HepG2 (cell line): ENCODE measurements at regions of chr4 and their contacts with region 1.

Region 1: GRCh38 chr4:107034091-107034995 is 1.8 kb downstream of the DKK2 start:
- DNase-seq: peak; percentile 16
- ATAC-seq: peak; percentile 97
- H3K4me3 ChIP-seq: peak overlapping the region in 2 of 3 experiments; percentile 23 to 37; a peak in 3 of 6 replicates
- H3K27ac ChIP-seq: no peak overlapping the region
- H3K4me1 ChIP-seq: peaks cover 10% of the 10 kb centered on the region; the same call in 1 of the 2 replicates
- H3K27me3 ChIP-seq: no peaks in the 10 kb centered on the region; a peak in 1 of 5 replicates
- CTCF ChIP-seq: peak; percentile 52
- EP300 ChIP-seq: no peak
- POLR2A ChIP-seq: no peak
- RAD21 ChIP-seq: 0 out of 2 replicates have a peak, but pooled peaks have one; percentile 16

Region 2: DNA sequence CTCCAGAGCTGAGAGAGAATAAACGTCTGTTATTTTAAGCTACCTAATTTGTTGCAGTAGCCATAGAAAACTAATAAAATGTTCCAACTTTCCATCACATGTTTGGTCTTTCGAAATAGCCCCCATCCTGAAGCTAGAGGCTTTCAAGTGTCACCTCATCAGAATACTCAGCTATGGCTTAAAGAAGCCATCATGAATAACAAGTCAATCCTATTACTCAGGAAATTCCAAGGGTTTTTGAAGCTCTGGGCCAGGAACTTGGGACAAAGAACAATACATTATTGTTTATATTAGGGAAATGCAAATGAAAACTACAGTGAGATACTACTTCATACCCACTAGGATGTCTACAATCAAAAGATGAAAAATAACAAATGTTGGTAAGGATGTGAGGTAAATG is 760.5 kb before region 1 on chr4:
- CTCF ChIA-PET with region 1: no interaction called
- POLR2A ChIA-PET with region 1: no interaction called
- in situ Hi-C with region 1: no loop called
- intact Hi-C with region 1: loop called (anchors 5 kb)
- DNase-seq: no peak
- ATAC-seq: no peak
- H3K4me3 ChIP-seq: no peak overlapping the region
- H3K27ac ChIP-seq: no peak overlapping the region
- H3K4me1 ChIP-seq: peaks cover 22% of the 10 kb centered on the region
- H3K27me3 ChIP-seq: no peaks in the 10 kb centered on the region
- CTCF ChIP-seq: no peak
- EP300 ChIP-seq: no peak
- POLR2A ChIP-seq: no peak
- RAD21 ChIP-seq: no peak

Region 3: GRCh38 chr4:107069049-107069448 is 34.7 kb after region 1 on chr4:
- CTCF ChIA-PET with region 1: no interaction called
- POLR2A ChIA-PET with region 1: no interaction called
- in situ Hi-C with region 1: no loop called
- intact Hi-C with region 1: no loop called
- DNase-seq: no peak
- ATAC-seq: no peak
- H3K4me3 ChIP-seq: no peak overlapping the region
- H3K27ac ChIP-seq: no peak overlapping the region
- H3K4me1 ChIP-seq: no peaks in the 10 kb centered on the region
- H3K27me3 ChIP-seq: no peaks in the 10 kb centered on the region
- CTCF ChIP-seq: no peak
- EP300 ChIP-seq: no peak
- POLR2A ChIP-seq: no peak
- RAD21 ChIP-seq: no peak

Region 4: GRCh38 chr4:107120661-107121060 is 86.3 kb after region 1 on chr4:
- CTCF ChIA-PET with region 1: no interaction called
- POLR2A ChIA-PET with region 1: no interaction called
- in situ Hi-C with region 1: no loop called
- intact Hi-C with region 1: no loop called
- DNase-seq: no peak
- ATAC-seq: no peak
- H3K4me3 ChIP-seq: no peak overlapping the region
- H3K27ac ChIP-seq: no peak overlapping the region
- H3K4me1 ChIP-seq: no peaks in the 10 kb centered on the region
- H3K27me3 ChIP-seq: no peaks in the 10 kb centered on the region; a peak in 1 of 5 replicates
- CTCF ChIP-seq: no peak
- EP300 ChIP-seq: no peak
- POLR2A ChIP-seq: no peak
- RAD21 ChIP-seq: no peak